Activated B cell treated with CpG ODN at 0.5 μM for 24 hours (primary cell): ENCODE measurements at regions of chr4 and their contacts with region 1.

Region 1: GRCh38 chr4:3091464-3091863 is 17.0 kb downstream of the HTT start:
- DNase-seq: no peak
- ATAC-seq: no peak
- H3K4me3 Mint-ChIP-seq: no peak overlapping the region
- H3K27ac Mint-ChIP-seq: no peak overlapping the region
- H3K4me1 Mint-ChIP-seq: peaks cover 11% of the 10 kb centered on the region
- H3K27me3 Mint-ChIP-seq: no peaks in the 10 kb centered on the region
- CTCF ChIP-seq: no peak

Region 2: DNA sequence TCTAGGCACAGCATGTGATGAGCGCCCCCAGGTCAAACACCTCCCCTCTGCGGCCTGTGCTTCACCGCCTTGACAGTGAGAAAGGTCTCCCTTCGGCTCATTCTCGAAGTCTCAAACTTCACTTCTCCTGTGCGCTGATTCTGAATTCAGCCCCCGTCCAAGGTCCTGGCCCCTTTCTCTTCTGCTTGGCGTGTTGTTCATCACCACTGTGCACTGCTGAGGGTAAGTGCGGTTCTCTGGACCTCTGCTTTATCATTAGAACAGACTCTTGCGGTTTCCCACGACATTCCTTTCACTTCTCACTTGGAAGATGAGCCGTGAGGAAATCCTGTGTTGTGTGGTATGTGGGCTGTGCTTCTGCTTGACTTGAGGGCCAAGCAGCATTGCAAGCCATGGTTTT is 29.0 kb before region 1 on chr4:
- CTCF ChIA-PET with region 1: no interaction called
- POLR2A ChIA-PET with region 1: interaction called, 16 read pairs
- intact Hi-C with region 1: no loop called
- DNase-seq: no peak
- ATAC-seq: no peak
- H3K4me3 Mint-ChIP-seq: no peak overlapping the region
- H3K27ac Mint-ChIP-seq: no peak overlapping the region
- H3K4me1 Mint-ChIP-seq: peaks cover 20% of the 10 kb centered on the region
- H3K27me3 Mint-ChIP-seq: no peaks in the 10 kb centered on the region
- CTCF ChIP-seq: no peak